Astrocyte of the cerebellum (primary cell): ENCODE measurements at regions of chr11 and their contacts with region 1.

Region 1: DNA sequence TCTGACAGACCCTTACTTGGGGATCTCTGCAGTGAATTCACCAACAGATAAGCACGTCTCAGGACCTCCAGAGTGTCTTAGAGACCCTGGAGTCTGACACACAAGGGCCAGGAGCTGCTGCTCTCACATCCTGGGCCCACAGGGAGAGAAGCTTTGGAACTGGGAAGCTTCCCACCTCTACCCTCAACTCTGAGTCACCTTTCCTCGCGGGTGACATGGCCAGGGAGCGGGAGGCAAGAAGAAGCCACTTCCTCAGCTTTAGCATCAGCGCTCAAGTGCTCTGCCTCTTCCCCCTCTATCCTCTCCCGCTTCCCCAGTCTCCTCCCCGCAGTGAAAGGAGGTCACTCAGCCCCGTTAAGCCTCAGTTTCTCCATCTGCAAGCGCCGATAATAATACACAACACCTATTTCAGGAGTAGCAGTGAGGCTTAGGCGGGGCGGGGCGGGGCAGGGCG is 1.1 kb downstream of the GDPD5 start:
- DNase-seq: no peak
- H3K4me3 ChIP-seq: peak overlapping the region; percentile 69
- CTCF ChIP-seq: no peak

Region 2: DNA sequence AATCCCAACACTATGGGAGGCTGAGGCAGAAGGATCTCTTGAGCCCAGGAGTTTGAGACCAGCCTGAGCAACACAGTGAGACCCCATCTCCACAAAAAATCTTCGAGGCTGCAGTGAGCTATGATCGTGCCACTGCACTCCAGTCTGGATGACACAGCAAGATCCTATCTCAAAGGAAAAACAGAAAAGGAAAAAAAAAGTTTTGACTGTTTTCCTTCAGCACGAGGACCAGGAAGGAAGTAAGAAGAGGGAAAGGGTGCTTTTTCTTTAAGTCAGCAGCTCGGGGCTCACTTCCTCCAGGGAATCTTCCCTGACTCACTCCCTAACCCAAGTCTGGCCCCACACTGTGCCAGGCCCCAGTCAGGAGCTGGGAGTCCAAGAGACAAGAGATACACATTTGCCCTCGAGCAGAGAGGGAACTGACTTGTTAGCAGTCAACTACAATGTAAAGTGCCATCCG is 187.4 kb before region 1 on chr11:
- in situ Hi-C with region 1: loop called (anchors 5 kb)
- DNase-seq: no peak
- H3K4me3 ChIP-seq: no peak overlapping the region
- CTCF ChIP-seq: no peak

Region 3: GRCh38 chr11:75437966-75438659 is 86.5 kb before region 1 on chr11:
- in situ Hi-C with region 1: loop called (anchors 5 kb)
- DNase-seq: no peak
- H3K4me3 ChIP-seq: no peak overlapping the region
- CTCF ChIP-seq: no peak

Region 4: GRCh38 chr11:75487365-75487764 is 37.2 kb before region 1 on chr11:
- in situ Hi-C with region 1: loop called (anchors 5 kb)
- DNase-seq: no peak
- H3K4me3 ChIP-seq: no peak overlapping the region
- CTCF ChIP-seq: no peak

Region 5: DNA sequence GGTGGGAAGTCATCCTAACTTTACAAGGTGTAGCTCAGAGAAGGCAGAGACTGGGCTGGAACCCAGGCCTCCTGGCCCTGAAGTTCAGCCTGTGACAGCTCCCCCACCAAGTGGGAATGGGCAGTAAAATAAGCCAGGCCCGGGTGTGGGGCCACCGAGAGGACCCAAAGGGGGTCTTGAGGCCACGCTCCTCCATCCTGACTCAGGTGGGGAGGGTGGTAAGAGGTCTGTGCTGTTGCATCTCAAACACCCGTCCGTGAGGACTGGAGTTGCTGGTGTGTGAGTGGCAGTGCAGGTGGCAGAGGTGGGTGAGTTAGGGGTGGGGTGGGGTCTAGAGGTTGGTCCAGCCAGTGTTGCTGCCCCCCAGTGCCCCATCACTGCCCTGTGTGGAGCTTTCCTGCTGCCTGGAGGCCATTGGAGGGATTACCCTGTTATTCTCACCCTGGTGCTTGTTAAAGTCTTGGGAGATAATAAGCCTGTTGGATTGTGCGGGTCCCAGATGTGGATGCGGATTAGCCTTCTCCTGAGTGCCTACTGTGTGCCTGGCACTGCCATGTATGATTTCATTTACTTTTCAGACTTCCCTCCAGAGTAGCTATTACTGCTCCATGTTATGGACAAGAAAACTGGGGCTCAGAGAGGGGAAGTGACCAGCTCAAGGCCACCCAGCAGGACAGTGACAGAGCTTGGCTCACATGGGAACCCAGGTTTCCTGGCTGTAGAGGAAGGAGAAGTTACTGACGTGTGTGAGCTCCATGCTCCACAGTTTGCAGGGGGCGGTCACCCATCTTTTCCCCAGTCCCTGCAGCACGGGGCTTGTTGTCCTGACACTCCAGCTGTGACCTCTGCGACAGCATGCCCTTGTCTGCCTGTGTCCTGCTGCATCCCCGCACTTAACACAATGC is 50.3 kb after region 1 on chr11:
- in situ Hi-C with region 1: loop called (anchors 5 kb)
- DNase-seq: no peak
- H3K4me3 ChIP-seq: no peak overlapping the region
- CTCF ChIP-seq: peak; percentile 36